IMR-90 (cell line): ENCODE measurements at regions of chr2 and their contacts with region 1.

Region 1: GRCh38 chr2:80429251-80429650 is 124.7 kb upstream of the LRRTM1 start:
- DNase-seq: no peak
- ATAC-seq: no peak
- H3K4me3 ChIP-seq: no peak overlapping the region
- H3K27ac ChIP-seq: no peak overlapping the region
- H3K4me1 ChIP-seq: no peaks in the 10 kb centered on the region
- H3K27me3 ChIP-seq: no peaks in the 10 kb centered on the region
- CTCF ChIP-seq: no peak
- POLR2A ChIP-seq: no peak
- RAD21 ChIP-seq: no peak

Region 2: GRCh38 chr2:80164375-80164774 is 264.9 kb before region 1 on chr2:
- CTCF ChIA-PET with region 1: no interaction called
- POLR2A ChIA-PET with region 1: interaction called, 10 read pairs
- dilution Hi-C with region 1: no loop called
- in situ Hi-C with region 1: no loop called
- intact Hi-C with region 1: no loop called
- DNase-seq: no peak
- ATAC-seq: no peak
- H3K4me3 ChIP-seq: no peak overlapping the region
- H3K27ac ChIP-seq: no peak overlapping the region
- H3K4me1 ChIP-seq: no peaks in the 10 kb centered on the region
- H3K27me3 ChIP-seq: no peaks in the 10 kb centered on the region
- CTCF ChIP-seq: no peak
- POLR2A ChIP-seq: no peak
- RAD21 ChIP-seq: no peak